Endothelial cell of umbilical vein (primary cell): ENCODE measurements at regions of chr4 and their contacts with region 1.

Region 1: DNA sequence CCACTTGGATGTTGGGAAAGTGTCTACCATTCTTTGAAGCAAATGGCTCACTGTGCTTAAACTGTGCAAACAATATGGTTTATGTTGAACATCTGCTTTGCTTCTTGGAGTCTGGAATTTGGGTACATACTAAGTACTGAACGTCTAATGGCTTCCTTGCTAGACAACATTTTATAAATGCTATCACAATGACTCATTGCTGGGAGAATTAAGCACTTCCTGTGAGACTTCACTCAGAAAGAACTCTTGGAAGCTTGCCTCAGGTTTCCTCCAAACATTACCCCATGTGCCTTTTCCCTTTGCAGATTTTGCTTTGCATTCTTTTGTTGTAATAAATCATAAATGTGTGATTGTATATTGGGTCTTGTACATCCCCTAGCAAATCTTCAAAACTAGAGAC is 139.7 kb downstream of the PACRGL start:
- DNase-seq: peak; percentile 88
- H3K4me3 ChIP-seq: no peak overlapping the region
- H3K27ac ChIP-seq: peak overlapping the region; percentile 86
- H3K4me1 ChIP-seq: peaks cover 31% of the 10 kb centered on the region
- H3K27me3 ChIP-seq: no peaks in the 10 kb centered on the region
- CTCF ChIP-seq: no peak
- POLR2A ChIP-seq: peak; percentile 34

Region 2: GRCh38 chr4:20700007-20700761 is 139.8 kb before region 1 on chr4 and contains the start of gene PACRGL:
- CTCF ChIA-PET with region 1: no interaction called
- POLR2A ChIA-PET with region 1: no interaction called
- dilution Hi-C with region 1: no loop called
- intact Hi-C with region 1: loop called (anchors 10 kb)
- DNase-seq: peak; percentile 94
- H3K4me3 ChIP-seq: peak within 1 kb of the TSS; percentile 88 to 92 (median 91)
- H3K27ac ChIP-seq: peak within 1 kb of the TSS; percentile 82
- H3K4me1 ChIP-seq: peaks cover 18% of the 10 kb centered on the region
- H3K27me3 ChIP-seq: peaks cover 0 to 3% of the 10 kb centered on the region in 2 experiments
- CTCF ChIP-seq: no peak
- POLR2A ChIP-seq: peak; percentile 43
- total RNA-seq, gene PACRGL: 19.2 and 20.2 TPM in 2 replicates

Region 3: GRCh38 chr4:20723019-20723418 is 116.9 kb before region 1 on chr4:
- CTCF ChIA-PET with region 1: no interaction called
- POLR2A ChIA-PET with region 1: no interaction called
- dilution Hi-C with region 1: no loop called
- intact Hi-C with region 1: no loop called
- DNase-seq: no peak
- H3K4me3 ChIP-seq: no peak overlapping the region
- H3K27ac ChIP-seq: no peak overlapping the region
- H3K4me1 ChIP-seq: no peaks in the 10 kb centered on the region
- H3K27me3 ChIP-seq: no peaks in the 10 kb centered on the region
- CTCF ChIP-seq: no peak
- POLR2A ChIP-seq: no peak

Region 4: GRCh38 chr4:20778896-20779295 is 61.1 kb before region 1 on chr4:
- CTCF ChIA-PET with region 1: interaction called, 8 read pairs
- POLR2A ChIA-PET with region 1: no interaction called
- dilution Hi-C with region 1: no loop called
- intact Hi-C with region 1: loop called (anchors 1 kb)
- DNase-seq: peak; percentile 85
- H3K4me3 ChIP-seq: no peak overlapping the region
- H3K27ac ChIP-seq: peak overlapping the region; percentile 80
- H3K4me1 ChIP-seq: peaks cover 18% of the 10 kb centered on the region
- H3K27me3 ChIP-seq: no peaks in the 10 kb centered on the region
- CTCF ChIP-seq: no peak
- POLR2A ChIP-seq: peak; percentile 60

Region 5: GRCh38 chr4:20938204-20938603 is 98.2 kb after region 1 on chr4:
- CTCF ChIA-PET with region 1: no interaction called
- POLR2A ChIA-PET with region 1: no interaction called
- dilution Hi-C with region 1: no loop called
- intact Hi-C with region 1: no loop called
- DNase-seq: no peak
- H3K4me3 ChIP-seq: no peak overlapping the region
- H3K27ac ChIP-seq: no peak overlapping the region
- H3K4me1 ChIP-seq: no peaks in the 10 kb centered on the region
- H3K27me3 ChIP-seq: no peaks in the 10 kb centered on the region
- CTCF ChIP-seq: no peak
- POLR2A ChIP-seq: no peak

Region 6: DNA sequence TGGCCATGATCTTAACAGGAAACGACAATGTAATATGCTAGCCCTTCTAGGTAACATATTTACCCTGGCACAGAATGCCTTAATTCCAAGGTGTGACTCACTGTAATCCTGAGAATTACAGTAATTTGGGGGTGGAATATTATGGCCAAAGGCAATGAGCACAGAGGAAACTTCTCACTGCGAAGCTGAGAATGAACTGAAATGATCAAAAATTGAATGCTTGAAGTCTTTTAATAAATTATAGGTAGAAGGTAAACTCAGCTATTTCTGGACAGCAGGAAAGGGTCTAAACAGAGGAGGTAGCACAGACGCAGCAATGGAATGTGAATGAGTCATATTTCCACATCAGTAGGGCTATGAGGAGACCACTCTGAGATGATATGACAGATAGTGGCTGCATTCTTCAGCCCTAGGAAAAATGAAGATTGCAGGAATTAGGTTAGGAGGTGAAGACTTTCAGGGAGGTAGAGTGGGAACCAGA is 172.9 kb after region 1 on chr4:
- CTCF ChIA-PET with region 1: interaction called, 3 read pairs
- POLR2A ChIA-PET with region 1: no interaction called
- dilution Hi-C with region 1: no loop called
- intact Hi-C with region 1: loop called (anchors 1 kb)
- DNase-seq: peak; percentile 76
- H3K4me3 ChIP-seq: no peak overlapping the region
- H3K27ac ChIP-seq: peak overlapping the region; percentile 89
- H3K4me1 ChIP-seq: peaks cover 31% of the 10 kb centered on the region
- H3K27me3 ChIP-seq: no peaks in the 10 kb centered on the region
- CTCF ChIP-seq: no peak
- POLR2A ChIP-seq: no peak

Region 7: GRCh38 chr4:21113496-21114223 is 273.7 kb after region 1 on chr4:
- CTCF ChIA-PET with region 1: no interaction called
- POLR2A ChIA-PET with region 1: no interaction called
- dilution Hi-C with region 1: no loop called
- intact Hi-C with region 1: loop called (anchors 2 kb)
- DNase-seq: peak; percentile 84
- H3K4me3 ChIP-seq: no peak overlapping the region
- H3K27ac ChIP-seq: peak overlapping the region; percentile 94
- H3K4me1 ChIP-seq: peaks cover 22% of the 10 kb centered on the region
- H3K27me3 ChIP-seq: no peaks in the 10 kb centered on the region
- CTCF ChIP-seq: no peak
- POLR2A ChIP-seq: no peak

Region 8: DNA sequence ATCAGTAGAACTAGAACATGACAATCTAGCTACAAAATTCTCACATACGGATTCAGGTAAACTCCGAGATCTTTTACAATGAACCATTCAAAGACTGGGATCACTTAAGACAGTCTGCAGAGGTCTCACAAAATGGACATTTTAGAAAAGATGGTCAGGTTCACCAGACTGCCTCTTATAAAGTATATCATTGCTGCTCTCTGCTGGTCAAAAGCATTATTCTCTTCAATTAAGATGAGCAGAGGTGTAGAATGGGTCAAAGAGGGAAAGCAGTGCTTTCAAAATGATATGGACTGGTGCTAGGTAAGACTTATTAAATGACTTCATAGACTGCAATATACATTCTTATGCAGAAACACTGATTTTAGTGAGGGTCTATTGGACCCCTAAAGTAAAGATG is 295.0 kb after region 1 on chr4:
- CTCF ChIA-PET with region 1: no interaction called
- POLR2A ChIA-PET with region 1: no interaction called
- dilution Hi-C with region 1: no loop called
- intact Hi-C with region 1: loop called (anchors 1 kb)
- DNase-seq: peak; percentile 62
- H3K4me3 ChIP-seq: no peak overlapping the region
- H3K27ac ChIP-seq: no peak overlapping the region
- H3K4me1 ChIP-seq: peaks cover 18% of the 10 kb centered on the region
- H3K27me3 ChIP-seq: no peaks in the 10 kb centered on the region
- CTCF ChIP-seq: peak; percentile 29 to 30
- POLR2A ChIP-seq: no peak